KBM-7 (cell line): ENCODE measurements at regions of chr5 and their contacts with region 1.

Region 1: GRCh38 chr5:154072414-154073171 is 33.8 kb downstream of the MFAP3 start:
- DNase-seq: peak; percentile 87

Region 2: DNA sequence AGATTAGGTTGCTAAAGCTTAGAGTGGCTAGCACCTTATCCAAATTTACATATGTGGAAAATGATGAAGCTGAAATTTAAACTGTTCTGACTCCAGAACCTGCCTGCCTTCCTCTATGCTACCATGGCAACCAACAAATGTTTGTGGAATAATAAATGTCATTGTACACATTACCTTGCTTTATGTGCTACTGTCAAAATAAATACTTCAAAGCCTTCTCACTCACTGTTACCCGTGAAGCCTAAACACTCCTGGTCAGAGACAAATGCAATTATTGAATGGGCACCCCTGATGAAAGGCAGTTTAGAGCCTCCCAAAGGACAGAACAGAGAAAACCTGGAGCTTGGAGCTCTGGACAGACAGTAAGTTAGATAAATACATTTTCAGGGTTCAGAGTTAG is 192.5 kb before region 1 on chr5:
- in situ Hi-C with region 1: no loop called
- DNase-seq: no peak

Region 3: DNA sequence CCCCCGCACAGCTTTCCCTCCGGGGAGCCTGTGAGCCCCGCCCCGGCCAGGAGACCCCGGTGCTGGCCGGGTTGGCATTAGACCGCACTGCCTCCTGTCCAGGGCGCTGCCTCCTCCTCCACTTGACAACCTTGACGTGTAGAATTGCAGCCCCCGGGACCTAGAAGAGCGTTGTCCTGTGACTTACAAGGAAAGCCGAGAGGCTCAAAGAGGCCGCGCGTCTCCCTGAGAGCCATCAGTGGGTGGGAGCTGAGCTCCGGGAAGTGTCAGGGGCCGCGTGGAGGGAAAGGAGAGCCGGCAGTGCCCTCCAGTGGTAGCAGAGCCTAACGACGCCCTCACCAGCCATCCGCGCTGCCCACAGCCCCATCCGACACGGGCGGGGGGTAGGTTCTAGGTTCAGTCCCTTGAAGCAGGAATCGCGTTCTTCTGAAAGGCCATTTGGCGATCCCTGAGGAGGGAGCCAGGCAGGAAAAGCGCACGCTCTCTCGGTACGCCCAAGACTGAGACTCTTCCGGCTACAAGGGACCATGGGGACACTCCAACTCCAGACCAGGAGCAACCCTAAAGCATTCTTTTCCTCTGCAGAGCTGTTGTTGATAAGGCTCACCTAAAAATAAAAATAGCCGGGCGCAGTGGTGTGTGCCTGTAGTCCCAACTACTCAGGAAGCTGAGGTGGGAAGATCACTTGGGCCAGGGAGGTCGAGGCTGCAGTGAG is 332.6 kb after region 1 on chr5:
- in situ Hi-C with region 1: loop called (anchors 25 kb)
- DNase-seq: peak; percentile 83